ENCODE measurements at regions of chr2 and their contacts with region 1.

Region 1: GRCh38 chr2:230582851-230583283 is 129.8 kb upstream of the CAB39 start:
- DNase-seq: no peak
- H3K4me3 Mint-ChIP-seq: no peak overlapping the region
- H3K27ac Mint-ChIP-seq: peak overlapping the region; percentile 75
- H3K4me1 Mint-ChIP-seq: peaks cover 29% of the 10 kb centered on the region
- H3K27me3 Mint-ChIP-seq: no peaks in the 10 kb centered on the region

Region 2: GRCh38 chr2:229943770-229944449 is 639.0 kb before region 1 on chr2:
- intact Hi-C with region 1: no loop called
- DNase-seq: no peak
- H3K4me3 Mint-ChIP-seq: no peak overlapping the region
- H3K27ac Mint-ChIP-seq: no peak overlapping the region
- H3K4me1 Mint-ChIP-seq: peaks cover 10% of the 10 kb centered on the region
- H3K27me3 Mint-ChIP-seq: no peaks in the 10 kb centered on the region

Region 3: DNA sequence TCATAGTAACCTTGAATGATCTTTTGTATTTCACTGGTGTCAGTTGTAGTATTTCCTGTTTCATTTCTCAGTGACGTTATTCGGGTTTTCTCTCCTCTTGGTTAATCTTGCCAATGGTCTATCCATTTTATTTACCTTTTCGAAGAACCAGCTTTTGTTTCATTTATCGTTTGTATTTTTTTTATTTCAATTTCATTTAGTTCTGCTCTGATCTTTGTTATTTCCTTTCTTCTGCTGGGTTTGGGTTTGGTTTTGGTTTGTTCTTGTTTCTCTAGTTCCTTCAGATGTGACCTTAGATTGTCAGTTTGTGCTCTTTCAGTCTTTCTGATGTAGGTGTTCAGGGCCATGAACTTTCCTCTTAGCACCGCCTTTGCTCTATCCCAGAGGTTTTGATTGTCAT is 320.6 kb before region 1 on chr2:
- intact Hi-C with region 1: loop called (anchors 1 kb)
- DNase-seq: no peak
- H3K4me3 Mint-ChIP-seq: peak overlapping the region; percentile 48
- H3K27ac Mint-ChIP-seq: peak overlapping the region; percentile 82
- H3K4me1 Mint-ChIP-seq: peaks cover 74% of the 10 kb centered on the region
- H3K27me3 Mint-ChIP-seq: no peaks in the 10 kb centered on the region

Region 4: GRCh38 chr2:230472621-230473018 is 110.2 kb before region 1 on chr2:
- intact Hi-C with region 1: loop called (anchors 2 kb)
- DNase-seq: no peak
- H3K4me3 Mint-ChIP-seq: peak overlapping the region; percentile 10
- H3K27ac Mint-ChIP-seq: peak overlapping the region; percentile 91
- H3K4me1 Mint-ChIP-seq: peaks cover 44% of the 10 kb centered on the region
- H3K27me3 Mint-ChIP-seq: no peaks in the 10 kb centered on the region

Region 5: GRCh38 chr2:230541934-230542380 is 40.9 kb before region 1 on chr2:
- intact Hi-C with region 1: loop called (anchors 2 kb)
- DNase-seq: no peak
- H3K4me3 Mint-ChIP-seq: no peak overlapping the region
- H3K27ac Mint-ChIP-seq: peak overlapping the region; percentile 68
- H3K4me1 Mint-ChIP-seq: peaks cover 37% of the 10 kb centered on the region
- H3K27me3 Mint-ChIP-seq: no peaks in the 10 kb centered on the region

Region 6: DNA sequence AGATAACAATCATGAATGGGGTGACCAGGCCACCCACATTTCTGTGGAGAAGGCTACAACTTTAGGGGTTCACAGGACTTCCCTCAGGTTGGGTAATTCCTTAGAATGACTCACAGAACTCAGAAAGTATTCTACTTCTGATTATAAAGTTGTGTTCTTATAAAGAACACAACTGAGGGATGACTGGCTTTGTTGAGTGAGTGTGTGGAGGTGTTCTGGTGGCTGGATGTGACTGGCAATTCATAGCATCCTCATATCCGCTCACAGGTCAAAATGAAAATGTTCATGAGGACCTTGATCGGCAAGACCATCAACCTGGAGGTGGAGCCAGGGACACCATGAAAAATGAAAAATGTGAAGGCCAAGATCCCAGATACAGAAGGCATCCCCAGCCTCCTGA is 13.6 kb before region 1 on chr2:
- intact Hi-C with region 1: loop called (anchors 2 kb)
- DNase-seq: no peak
- H3K4me3 Mint-ChIP-seq: no peak overlapping the region
- H3K27ac Mint-ChIP-seq: peak overlapping the region; percentile 34
- H3K4me1 Mint-ChIP-seq: peaks cover 9% of the 10 kb centered on the region
- H3K27me3 Mint-ChIP-seq: no peaks in the 10 kb centered on the region

Region 7: GRCh38 chr2:230600285-230600684 is 17.4 kb after region 1 on chr2:
- intact Hi-C with region 1: loop called (anchors 1 kb)
- DNase-seq: no peak
- H3K4me3 Mint-ChIP-seq: no peak overlapping the region
- H3K27ac Mint-ChIP-seq: no peak overlapping the region
- H3K4me1 Mint-ChIP-seq: peaks cover 59% of the 10 kb centered on the region
- H3K27me3 Mint-ChIP-seq: no peaks in the 10 kb centered on the region

Region 8: DNA sequence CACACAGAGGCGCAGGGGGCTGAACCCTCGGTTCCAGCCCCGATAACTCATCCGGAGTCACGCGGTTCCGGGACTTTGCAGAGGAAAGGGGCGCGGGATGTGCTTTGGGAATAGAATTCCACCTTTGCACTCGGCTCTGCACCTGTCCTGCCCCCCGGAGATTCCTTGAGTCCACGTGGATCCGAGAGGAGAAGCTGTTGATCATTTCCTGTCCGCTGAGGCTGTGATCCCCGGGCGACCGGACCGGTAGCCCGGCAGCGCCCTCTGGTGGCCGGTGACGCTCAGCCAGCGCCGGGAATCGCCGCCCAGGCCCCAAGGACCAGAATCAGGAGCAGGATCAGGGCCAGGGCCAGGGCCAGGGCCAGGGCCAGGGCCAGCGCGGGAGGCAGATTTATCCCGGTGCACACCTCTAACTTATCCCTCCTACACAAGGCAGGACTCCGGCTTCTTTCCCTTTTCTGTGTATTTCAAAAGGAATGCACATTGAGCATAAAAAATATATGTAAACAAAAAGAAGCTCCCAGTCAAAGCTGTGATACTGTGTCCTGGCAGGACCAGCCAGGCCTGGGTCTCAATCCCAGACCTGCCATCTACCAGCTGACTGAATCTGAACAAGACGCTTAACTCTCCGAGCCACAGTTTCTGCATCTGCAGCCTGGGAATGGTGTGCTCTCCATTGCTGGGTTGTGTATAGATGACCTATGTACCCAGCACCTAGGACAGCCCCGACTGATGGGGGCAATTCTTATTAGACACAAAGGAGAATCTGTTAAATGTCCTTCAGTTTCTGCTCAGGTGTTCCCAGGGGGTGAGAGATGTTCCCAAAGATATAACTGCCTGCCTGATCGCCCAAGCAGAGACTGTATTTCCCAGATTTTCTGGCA is 404.5 kb after region 1 on chr2:
- intact Hi-C with region 1: no loop called
- DNase-seq: peak; percentile 63
- H3K4me3 Mint-ChIP-seq: peak overlapping the region; percentile 58
- H3K27ac Mint-ChIP-seq: no peak overlapping the region
- H3K4me1 Mint-ChIP-seq: peaks cover 29% of the 10 kb centered on the region
- H3K27me3 Mint-ChIP-seq: peaks cover 40% of the 10 kb centered on the region